ENCODE measurements at regions of chr10 and their contacts with region 1.

Region 1: GRCh38 chr10:32795598-32796183 is 162.3 kb downstream of the ITGB1 start:
- DNase-seq: peak; percentile 17
- H3K4me3 ChIP-seq: no peak overlapping the region
- H3K27ac ChIP-seq: no peak overlapping the region
- H3K4me1 ChIP-seq: no peaks in the 10 kb centered on the region
- H3K27me3 ChIP-seq: no peaks in the 10 kb centered on the region
- CTCF ChIP-seq: peak; percentile 61 to 71

Region 2: GRCh38 chr10:32731527-32731926 is 64.2 kb before region 1 on chr10:
- CTCF ChIA-PET with region 1: no interaction called
- dilution Hi-C with region 1: loop called (anchors 10 kb)
- in situ Hi-C with region 1: no loop called
- intact Hi-C with region 1: no loop called
- DNase-seq: peak; percentile 38
- H3K4me3 ChIP-seq: no peak overlapping the region
- H3K27ac ChIP-seq: no peak overlapping the region
- H3K4me1 ChIP-seq: no peaks in the 10 kb centered on the region
- H3K27me3 ChIP-seq: no peaks in the 10 kb centered on the region
- CTCF ChIP-seq: no peak

Region 3: GRCh38 chr10:32751582-32751981 is 44.1 kb before region 1 on chr10:
- CTCF ChIA-PET with region 1: no interaction called
- dilution Hi-C with region 1: no loop called
- in situ Hi-C with region 1: no loop called
- intact Hi-C with region 1: no loop called
- DNase-seq: no peak
- H3K4me3 ChIP-seq: no peak overlapping the region
- H3K27ac ChIP-seq: no peak overlapping the region
- H3K4me1 ChIP-seq: no peaks in the 10 kb centered on the region
- H3K27me3 ChIP-seq: no peaks in the 10 kb centered on the region
- CTCF ChIP-seq: no peak

Region 4: GRCh38 chr10:32938554-32939061 is 142.9 kb after region 1 on chr10:
- CTCF ChIA-PET with region 1: no interaction called
- dilution Hi-C with region 1: no loop called
- in situ Hi-C with region 1: no loop called
- intact Hi-C with region 1: loop called (anchors 5 kb)
- DNase-seq: peak; percentile 37
- H3K4me3 ChIP-seq: peak overlapping the region in 2 of 3 experiments; percentile 3 to 12
- H3K27ac ChIP-seq: peak overlapping the region; percentile 17
- H3K4me1 ChIP-seq: peaks cover 56% of the 10 kb centered on the region
- H3K27me3 ChIP-seq: no peaks in the 10 kb centered on the region
- CTCF ChIP-seq: no peak